Panc1 (cell line): ENCODE measurements at regions of chr12 and their contacts with region 1.

Region 1: DNA sequence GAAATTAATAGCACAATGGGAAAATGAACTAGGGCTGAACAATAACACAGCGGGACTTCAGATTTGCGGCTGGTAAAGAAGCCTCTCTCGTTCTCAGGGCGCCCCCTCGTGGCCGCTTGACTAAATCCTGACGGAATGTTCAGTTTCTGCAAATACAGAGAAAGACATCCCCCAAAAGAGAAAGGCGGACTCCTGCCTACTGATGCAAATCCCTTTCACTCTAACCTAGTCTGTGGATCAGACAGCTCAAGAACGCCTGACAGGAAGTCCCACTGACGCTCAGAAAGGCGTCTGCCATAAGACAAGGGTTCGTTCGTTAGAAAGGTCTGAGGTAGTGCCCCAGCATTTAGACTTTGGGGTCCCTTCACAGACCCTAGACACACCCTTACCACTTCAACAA is 2.5 kb downstream of the NUAK1 start:
- DNase-seq: no peak
- ATAC-seq: peak; percentile 14
- H3K4me3 ChIP-seq: peak overlapping the region; percentile 54 to 68
- H3K27ac ChIP-seq: peak overlapping the region; percentile 96
- H3K4me1 ChIP-seq: peaks cover 68% of the 10 kb centered on the region
- H3K27me3 ChIP-seq: no peaks in the 10 kb centered on the region
- CTCF ChIP-seq: peak; percentile 95

Region 2: GRCh38 chr12:105420659-105421240 is 715.5 kb before region 1 on chr12:
- CTCF ChIA-PET with region 1: interaction called, 20 read pairs
- POLR2A ChIA-PET with region 1: no interaction called
- in situ Hi-C with region 1: no loop called
- intact Hi-C with region 1: loop called (anchors 1 kb)
- DNase-seq: peak; percentile 55
- ATAC-seq: peak; percentile 94
- H3K4me3 ChIP-seq: no peak overlapping the region
- H3K27ac ChIP-seq: peak overlapping the region; percentile 75
- H3K4me1 ChIP-seq: peaks cover 5% of the 10 kb centered on the region
- H3K27me3 ChIP-seq: no peaks in the 10 kb centered on the region
- CTCF ChIP-seq: peak; percentile 88

Region 3: DNA sequence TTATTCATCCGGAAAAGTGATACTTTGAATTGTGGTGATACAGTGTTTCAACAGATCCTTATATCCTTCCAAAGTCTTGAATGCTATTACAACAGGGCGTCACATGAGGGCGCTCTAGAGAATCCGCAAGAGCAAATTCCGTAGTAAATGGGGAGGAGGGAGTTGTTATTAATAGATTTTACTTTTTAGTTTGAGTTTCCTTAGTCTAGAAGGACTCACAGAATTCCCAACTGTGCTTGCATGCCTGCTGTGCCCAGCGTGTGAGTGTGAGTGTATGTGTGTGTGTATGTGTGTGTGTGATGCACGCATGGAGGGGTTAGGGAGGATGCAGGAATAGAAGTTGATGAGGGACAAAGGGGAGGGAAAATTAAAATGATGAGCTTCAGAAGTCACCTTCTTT is 430.5 kb before region 1 on chr12:
- CTCF ChIA-PET with region 1: interaction called, 3 read pairs
- POLR2A ChIA-PET with region 1: no interaction called
- in situ Hi-C with region 1: no loop called
- intact Hi-C with region 1: loop called (anchors 10 kb)
- DNase-seq: peak; percentile 12
- ATAC-seq: no peak
- H3K4me3 ChIP-seq: no peak overlapping the region
- H3K27ac ChIP-seq: no peak overlapping the region
- H3K4me1 ChIP-seq: no peaks in the 10 kb centered on the region
- H3K27me3 ChIP-seq: no peaks in the 10 kb centered on the region
- CTCF ChIP-seq: peak; percentile 87

Region 4: DNA sequence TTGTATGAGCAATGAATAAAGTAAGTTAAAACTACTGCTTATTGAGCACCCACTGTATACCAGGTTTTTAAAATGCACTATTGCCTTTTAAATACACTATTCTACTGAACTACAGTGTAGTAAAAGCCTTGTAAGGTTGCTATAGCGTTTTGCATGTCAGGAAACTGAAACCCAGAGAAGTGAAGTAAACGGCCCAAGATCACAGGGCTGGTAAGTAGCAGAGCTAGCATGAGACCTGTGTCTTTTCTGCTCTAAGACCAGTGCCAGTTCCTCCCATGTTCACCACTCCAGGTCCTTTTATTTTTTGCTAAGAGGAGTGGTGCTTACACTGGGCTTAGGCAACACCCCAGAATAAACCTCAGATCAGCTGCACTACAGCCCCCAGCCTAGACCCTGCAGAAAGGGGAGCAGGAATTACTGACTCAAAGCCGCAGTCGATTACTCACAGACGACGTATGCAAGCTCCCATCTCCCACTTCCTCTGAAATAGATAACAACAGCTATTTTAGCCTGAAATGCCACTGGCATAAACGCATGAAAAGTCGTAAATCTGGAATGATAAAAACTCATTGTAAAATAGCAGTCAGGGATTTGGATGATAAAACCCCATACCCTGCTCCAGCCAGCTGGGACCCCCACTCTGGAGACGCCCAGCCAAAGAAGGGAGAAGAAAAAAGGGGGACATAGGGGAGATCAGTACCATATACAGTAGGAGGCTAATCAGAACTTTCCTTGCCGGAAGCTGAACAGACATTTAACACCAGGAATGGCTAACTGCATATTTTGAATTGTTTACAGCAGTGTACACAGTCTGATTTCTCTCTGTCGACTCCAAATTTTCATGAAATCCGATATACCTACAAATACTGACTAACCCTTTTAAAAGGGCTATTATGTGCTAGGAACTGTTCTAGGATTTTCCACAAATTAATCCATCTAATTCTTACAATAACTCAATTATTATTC is 105.8 kb before region 1 on chr12:
- CTCF ChIA-PET with region 1: no interaction called
- POLR2A ChIA-PET with region 1: interaction called, 11 read pairs
- in situ Hi-C with region 1: no loop called
- intact Hi-C with region 1: loop called (anchors 2 kb)
- DNase-seq: peak; percentile 32
- ATAC-seq: peak; percentile 92
- H3K4me3 ChIP-seq: peak overlapping the region in 1 of 2 experiments; percentile 15; a peak in 2 of 4 replicates
- H3K27ac ChIP-seq: peak overlapping the region; percentile 95
- H3K4me1 ChIP-seq: peaks cover 50% of the 10 kb centered on the region
- H3K27me3 ChIP-seq: no peaks in the 10 kb centered on the region
- CTCF ChIP-seq: no peak

Region 5: GRCh38 chr12:106170285-106170684 is 34.0 kb after region 1 on chr12:
- CTCF ChIA-PET with region 1: no interaction called
- POLR2A ChIA-PET with region 1: interaction called, 11 read pairs
- in situ Hi-C with region 1: no loop called
- intact Hi-C with region 1: no loop called
- DNase-seq: no peak
- ATAC-seq: no peak
- H3K4me3 ChIP-seq: no peak overlapping the region
- H3K27ac ChIP-seq: no peak overlapping the region
- H3K4me1 ChIP-seq: no peaks in the 10 kb centered on the region
- H3K27me3 ChIP-seq: peaks cover 13% of the 10 kb centered on the region
- CTCF ChIP-seq: no peak

Region 6: DNA sequence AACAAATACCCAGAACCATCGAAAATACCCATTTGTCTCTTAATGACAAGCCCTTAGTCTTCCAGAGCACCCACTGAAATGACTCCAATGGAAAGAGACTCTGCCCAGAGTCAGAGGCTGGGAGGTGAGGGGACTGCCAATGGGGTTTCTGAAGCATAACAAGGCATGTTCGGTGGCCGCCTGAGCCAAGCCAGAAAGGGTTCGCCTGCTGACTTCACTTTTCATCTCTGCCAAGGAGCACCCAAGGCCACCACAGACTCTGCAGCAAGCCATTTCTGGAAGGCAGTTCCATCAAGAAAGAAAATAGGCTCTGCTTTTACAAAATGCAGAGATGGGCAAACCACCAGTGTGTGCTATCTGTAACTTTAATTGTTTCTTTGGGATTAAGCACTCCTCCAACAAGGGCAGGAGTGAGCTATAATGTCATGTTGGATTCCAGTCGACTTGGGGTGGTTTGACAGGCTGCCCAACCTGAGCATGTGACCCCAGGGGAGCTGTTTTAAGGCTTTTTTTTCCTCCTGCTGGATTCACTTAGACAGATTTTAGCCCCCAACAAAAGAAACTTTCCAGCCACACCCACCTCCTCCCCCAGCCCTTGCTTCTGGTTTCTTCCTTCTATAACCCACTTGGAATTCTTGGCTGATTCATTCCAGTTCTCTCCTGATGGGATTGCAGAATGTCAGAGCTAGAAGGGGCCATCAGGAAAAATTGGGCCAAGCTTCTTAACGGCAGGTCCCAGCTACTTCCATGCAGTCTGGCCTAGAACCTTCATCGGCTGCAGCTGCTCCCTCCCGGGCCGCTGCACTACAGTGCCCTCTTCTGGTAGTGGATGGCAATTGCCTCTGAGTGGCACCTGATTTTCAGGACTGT is 87.5 kb after region 1 on chr12:
- CTCF ChIA-PET with region 1: interaction called, 18 read pairs
- POLR2A ChIA-PET with region 1: interaction called, 3 read pairs
- in situ Hi-C with region 1: no loop called
- intact Hi-C with region 1: loop called (anchors 5 kb)
- DNase-seq: peak; percentile 68
- ATAC-seq: peak; percentile 93
- H3K4me3 ChIP-seq: no peak overlapping the region
- H3K27ac ChIP-seq: no peak overlapping the region
- H3K4me1 ChIP-seq: 0 out of 2 replicates have a peak, but pooled peaks cover 3% of the 10 kb centered on the region
- H3K27me3 ChIP-seq: no peaks in the 10 kb centered on the region
- CTCF ChIP-seq: peak; percentile 99

Region 7: DNA sequence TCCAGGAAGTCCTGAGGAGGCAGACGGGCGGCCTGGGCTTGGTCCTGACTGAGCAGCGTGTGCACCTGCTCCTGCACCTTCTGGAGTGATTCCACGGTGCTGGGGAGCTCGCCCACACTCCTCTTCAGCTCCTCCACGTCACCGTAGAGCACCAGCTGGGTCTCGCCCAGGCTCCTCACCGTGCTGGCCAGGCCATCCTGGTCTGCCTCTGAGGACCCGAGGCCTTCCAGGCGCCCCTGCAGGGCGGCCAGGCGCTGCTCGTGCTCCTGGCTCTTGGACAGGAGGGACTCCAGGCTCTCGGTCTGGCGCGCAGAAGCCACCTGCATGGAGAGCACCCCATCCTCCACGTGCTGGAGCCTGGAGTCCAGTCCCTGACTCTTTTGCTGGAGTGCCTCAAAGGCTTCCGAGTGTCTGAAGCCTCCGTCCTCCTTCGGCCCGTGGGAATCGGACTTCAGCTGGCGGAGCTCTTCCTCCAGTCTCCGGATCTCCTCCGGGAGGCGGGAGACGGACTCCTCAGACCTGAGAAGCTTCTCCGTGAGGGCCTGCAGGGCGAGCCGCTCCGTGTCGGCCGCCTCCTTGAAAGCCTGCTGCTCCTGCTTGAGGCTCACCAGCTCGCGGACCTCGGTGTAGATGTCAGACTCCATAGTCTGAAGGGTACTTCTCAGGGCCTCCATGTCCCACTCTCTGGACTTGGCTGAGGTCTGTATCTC is 103.1 kb after region 1 on chr12:
- CTCF ChIA-PET with region 1: no interaction called
- POLR2A ChIA-PET with region 1: no interaction called
- in situ Hi-C with region 1: no loop called
- intact Hi-C with region 1: no loop called
- DNase-seq: no peak
- ATAC-seq: peak; percentile 41; the same call in 1 of the 2 replicates
- H3K4me3 ChIP-seq: no peak overlapping the region
- H3K27ac ChIP-seq: no peak overlapping the region
- H3K4me1 ChIP-seq: no peaks in the 10 kb centered on the region
- H3K27me3 ChIP-seq: no peaks in the 10 kb centered on the region
- CTCF ChIP-seq: no peak